ENCODE measurements at regions of chr17 and their contacts with region 1.

Region 1: GRCh38 chr17:43576563-43577229 is 30.6 kb upstream of the ETV4 start:
- DNase-seq: peak; percentile 45 to 70
- ATAC-seq: peak; percentile 68

Region 2: GRCh38 chr17:43671031-43671692 is 94.5 kb after region 1 on chr17:
- intact Hi-C with region 1: loop called in 1 of 2 experiments (anchors 2 kb)
- DNase-seq: no peak
- ATAC-seq: no peak

Region 3: GRCh38 chr17:43760254-43760852 is 183.7 kb after region 1 on chr17:
- intact Hi-C with region 1: loop called in 1 of 2 experiments (anchors 10 kb)
- DNase-seq: peak; percentile 88 to 97
- ATAC-seq: peak; percentile 97

Region 4: GRCh38 chr17:43861024-43861621 is 284.4 kb after region 1 on chr17:
- intact Hi-C with region 1: no loop called
- DNase-seq: no peak
- ATAC-seq: no peak